Colonic mucosa (tissue), 4 donors: ENCODE measurements at regions of chr16 and their contacts with region 1.

Region 1: DNA sequence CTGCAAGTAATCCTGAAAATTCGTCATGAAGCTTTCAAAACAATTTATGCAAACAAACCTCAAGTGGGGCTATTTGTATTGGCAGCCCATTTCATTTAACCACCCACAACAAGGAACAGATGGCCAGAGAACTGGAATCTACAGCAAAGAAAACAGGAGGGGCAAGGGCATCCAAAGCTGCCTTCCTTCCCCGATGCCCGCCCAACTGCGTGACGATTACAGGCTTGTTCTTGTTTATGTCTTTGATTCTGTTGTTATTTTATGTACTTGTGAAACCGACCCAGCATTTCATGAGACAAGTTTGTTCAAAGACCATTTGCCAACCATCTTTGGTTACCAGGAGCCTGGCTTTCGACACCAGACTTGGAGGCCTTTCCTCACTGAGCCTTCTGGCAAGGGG is 59.1 kb upstream of the IRX6 start:
- DNase-seq: no peak
- H3K4me3 ChIP-seq: no peak overlapping the region
- H3K27ac ChIP-seq: no peak overlapping the region
- H3K4me1 ChIP-seq: no peaks in the 10 kb centered on the region
- H3K27me3 ChIP-seq: no peaks in the 10 kb centered on the region
- CTCF ChIP-seq: no peak

Region 2: GRCh38 chr16:55043499-55043898 is 221.4 kb before region 1 on chr16:
- intact Hi-C with region 1: loop called (anchors 5 kb)
- DNase-seq: no peak
- H3K4me3 ChIP-seq: no peak overlapping the region
- H3K27ac ChIP-seq: no peak overlapping the region
- H3K4me1 ChIP-seq: no peaks in the 10 kb centered on the region
- H3K27me3 ChIP-seq: no peaks in the 10 kb centered on the region
- CTCF ChIP-seq: no peak

Region 3: GRCh38 chr16:55643161-55643970 is 378.4 kb after region 1 on chr16:
- intact Hi-C with region 1: no loop called
- DNase-seq: no peak
- H3K4me3 ChIP-seq: no peak overlapping the region
- H3K27ac ChIP-seq: no peak overlapping the region
- H3K4me1 ChIP-seq: no peaks in the 10 kb centered on the region
- H3K27me3 ChIP-seq: no peaks in the 10 kb centered on the region
- CTCF ChIP-seq: no peak

Region 4: DNA sequence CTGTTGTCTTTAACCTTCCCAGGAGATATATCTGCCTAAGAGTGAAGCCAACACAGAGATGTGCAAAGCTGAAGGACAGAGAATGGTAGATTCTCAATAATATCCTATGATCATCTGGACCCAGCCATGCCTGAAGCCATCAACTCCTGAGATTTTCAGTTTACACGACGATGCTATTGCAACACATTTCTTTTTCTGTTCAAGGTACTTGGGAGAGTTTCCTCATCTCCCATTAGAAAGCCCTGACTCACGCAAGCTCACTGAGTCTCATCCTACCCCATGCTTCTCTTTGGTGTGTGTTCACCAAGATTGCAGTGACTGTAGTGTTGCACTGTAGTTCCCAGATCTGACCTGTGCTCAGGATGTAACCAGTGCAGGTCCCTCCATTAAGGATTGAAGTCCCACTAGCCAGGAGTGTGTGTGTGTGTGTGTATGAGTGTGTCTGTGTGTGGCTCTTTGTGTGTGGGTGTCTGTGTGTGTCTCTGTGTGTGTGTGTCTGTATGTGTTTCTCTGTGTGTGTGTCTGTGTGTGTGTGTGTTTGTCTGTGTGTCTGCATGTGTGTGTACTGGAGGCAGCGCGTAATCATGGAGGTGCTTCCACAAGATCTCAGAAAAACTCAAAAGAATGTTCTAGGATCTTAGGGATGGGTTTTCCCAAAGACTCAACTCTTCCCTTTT is 552.4 kb after region 1 on chr16:
- intact Hi-C with region 1: no loop called
- DNase-seq: no peak
- H3K4me3 ChIP-seq: no peak overlapping the region
- H3K27ac ChIP-seq: no peak overlapping the region
- H3K4me1 ChIP-seq: no peaks in the 10 kb centered on the region
- H3K27me3 ChIP-seq: no peaks in the 10 kb centered on the region
- CTCF ChIP-seq: no peak